PC-3 (cell line): ENCODE measurements at regions of chr17 and their contacts with region 1.

Region 1: DNA sequence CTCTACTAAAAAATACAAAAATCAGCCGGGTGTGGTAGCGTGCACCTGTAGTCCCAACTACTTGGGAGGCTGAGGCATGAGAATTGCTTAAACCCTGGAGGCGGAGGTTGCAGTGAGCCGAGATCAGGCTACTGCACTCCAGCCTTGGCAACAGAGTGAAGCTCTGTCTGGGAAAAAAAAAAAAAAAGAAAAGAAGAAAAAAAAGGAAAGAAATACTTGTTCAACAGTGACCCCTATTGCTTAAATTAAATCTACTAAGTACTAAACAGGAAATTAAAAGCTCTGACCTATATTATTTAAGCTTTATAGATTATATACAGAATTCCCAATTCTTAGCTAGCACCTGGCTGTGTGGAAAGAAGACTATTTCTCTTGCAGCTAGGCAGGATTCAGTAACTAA is 48.9 kb downstream of the FBXL20 start:
- DNase-seq: no peak
- ATAC-seq: no peak
- H3K4me3 ChIP-seq: no peak overlapping the region
- H3K27ac ChIP-seq: no peak overlapping the region
- H3K4me1 ChIP-seq: no peaks in the 10 kb centered on the region
- H3K27me3 ChIP-seq: no peaks in the 10 kb centered on the region
- CTCF ChIP-seq: peak; percentile 20; the same call in 1 of the 2 replicates

Region 2: GRCh38 chr17:38921756-38922411 is 430.6 kb before region 1 on chr17:
- CTCF ChIA-PET with region 1: interaction called, 13 read pairs
- POLR2A ChIA-PET with region 1: no interaction called
- intact Hi-C with region 1: no loop called
- DNase-seq: no peak
- ATAC-seq: no peak
- H3K4me3 ChIP-seq: no peak overlapping the region
- H3K27ac ChIP-seq: no peak overlapping the region
- H3K4me1 ChIP-seq: no peaks in the 10 kb centered on the region
- H3K27me3 ChIP-seq: no peaks in the 10 kb centered on the region
- CTCF ChIP-seq: no peak

Region 3: DNA sequence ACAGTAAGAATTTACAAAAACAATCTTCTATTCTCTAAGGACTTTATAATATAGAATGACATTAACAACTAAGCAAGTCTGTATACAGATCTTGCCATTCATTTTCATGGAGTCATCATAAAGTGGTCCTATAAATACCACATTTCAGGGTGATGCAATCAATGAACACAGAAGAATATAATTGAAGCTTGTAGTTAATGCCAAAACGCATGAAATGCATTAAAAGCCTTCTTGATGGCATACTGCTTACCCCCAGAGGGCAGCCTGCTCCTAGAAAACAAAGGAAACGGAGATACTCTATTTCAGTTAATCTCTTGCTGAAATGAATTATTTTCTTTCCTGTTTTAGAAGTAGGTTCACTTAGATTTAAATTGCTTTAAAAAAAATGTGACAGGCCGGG is 81.6 kb before region 1 on chr17:
- CTCF ChIA-PET with region 1: interaction called, 26 read pairs
- POLR2A ChIA-PET with region 1: no interaction called
- intact Hi-C with region 1: loop called (anchors 1 kb)
- DNase-seq: peak; percentile 22
- ATAC-seq: no peak
- H3K4me3 ChIP-seq: no peak overlapping the region
- H3K27ac ChIP-seq: no peak overlapping the region
- H3K4me1 ChIP-seq: no peaks in the 10 kb centered on the region
- H3K27me3 ChIP-seq: no peaks in the 10 kb centered on the region
- CTCF ChIP-seq: peak; percentile 50; the same call in 1 of the 2 replicates

Region 4: DNA sequence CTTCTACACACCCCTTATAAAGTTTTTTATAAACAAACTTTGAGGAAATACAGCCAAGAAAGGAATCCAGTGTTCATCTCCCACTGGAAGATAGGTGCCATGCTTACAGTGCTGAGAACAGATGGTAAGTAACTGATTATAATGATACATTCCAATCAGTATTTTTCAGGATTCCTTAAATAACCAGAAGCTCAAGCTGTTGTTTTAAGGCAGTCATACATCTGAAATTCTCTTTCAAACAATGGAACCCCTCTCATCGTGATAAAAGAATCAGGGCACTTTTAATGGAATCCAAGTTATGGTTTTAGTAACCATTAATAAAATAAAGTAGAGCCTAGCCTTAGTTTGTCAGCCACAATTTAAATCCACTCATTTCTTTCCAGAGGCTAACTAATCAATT is 70.7 kb before region 1 on chr17:
- CTCF ChIA-PET with region 1: interaction called, 10 read pairs
- POLR2A ChIA-PET with region 1: interaction called, 4 read pairs
- intact Hi-C with region 1: no loop called
- DNase-seq: no peak
- ATAC-seq: no peak; the same call in 1 of the 2 replicates
- H3K4me3 ChIP-seq: no peak overlapping the region
- H3K27ac ChIP-seq: peak overlapping the region; percentile 43
- H3K4me1 ChIP-seq: peaks cover 15% of the 10 kb centered on the region
- H3K27me3 ChIP-seq: no peaks in the 10 kb centered on the region
- CTCF ChIP-seq: no peak

Region 5: GRCh38 chr17:39401412-39402243 is 49.1 kb after region 1 on chr17 and contains the start of gene FBXL20:
- CTCF ChIA-PET with region 1: interaction called, 12 read pairs
- POLR2A ChIA-PET with region 1: interaction called, 5 read pairs
- intact Hi-C with region 1: no loop called
- DNase-seq: peak; percentile 86
- ATAC-seq: peak; percentile 63
- H3K4me3 ChIP-seq: peak within 1 kb of the TSS; percentile 96
- H3K27ac ChIP-seq: no peak within 1 kb of the TSS
- H3K4me1 ChIP-seq: peaks cover 29% of the 10 kb centered on the region
- H3K27me3 ChIP-seq: no peaks in the 10 kb centered on the region
- CTCF ChIP-seq: no peak
- total RNA-seq, gene FBXL20: 2.2 and 5.0 TPM in 2 replicates